ENCODE measurements at regions of chr2 and their contacts with region 1.

Region 1: DNA sequence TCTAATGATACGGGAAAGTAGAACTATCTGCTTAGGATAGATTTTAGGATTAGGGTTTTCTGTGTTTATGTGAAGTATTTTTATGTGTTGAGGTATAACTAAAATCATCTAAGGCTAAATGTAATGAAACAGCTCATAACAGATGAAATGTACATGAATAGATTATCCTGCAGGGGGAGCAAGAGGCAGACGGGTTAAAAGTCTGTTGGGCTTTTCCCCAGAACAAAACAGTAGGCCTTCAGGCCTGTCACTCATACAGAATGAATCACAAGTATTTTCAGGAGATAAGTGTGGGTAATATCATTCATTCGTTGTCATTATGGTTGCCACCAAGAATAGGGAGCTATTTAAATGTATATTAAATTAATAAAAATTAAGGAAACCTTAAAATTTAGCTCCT is 107.9 kb upstream of the IL1R2 start:
- DNase-seq: no peak
- H3K4me3 ChIP-seq: no peak overlapping the region
- H3K27ac ChIP-seq: no peak overlapping the region
- H3K4me1 ChIP-seq: peaks cover 0 to 19% (median 0%) of the 10 kb centered on the region in 4 donors
- H3K27me3 ChIP-seq: no peaks in the 10 kb centered on the region
- CTCF ChIP-seq: peak; percentile 45 to 58 (median 49)
- EP300 ChIP-seq: no peak
- POLR2A ChIP-seq: no peak

Region 2: DNA sequence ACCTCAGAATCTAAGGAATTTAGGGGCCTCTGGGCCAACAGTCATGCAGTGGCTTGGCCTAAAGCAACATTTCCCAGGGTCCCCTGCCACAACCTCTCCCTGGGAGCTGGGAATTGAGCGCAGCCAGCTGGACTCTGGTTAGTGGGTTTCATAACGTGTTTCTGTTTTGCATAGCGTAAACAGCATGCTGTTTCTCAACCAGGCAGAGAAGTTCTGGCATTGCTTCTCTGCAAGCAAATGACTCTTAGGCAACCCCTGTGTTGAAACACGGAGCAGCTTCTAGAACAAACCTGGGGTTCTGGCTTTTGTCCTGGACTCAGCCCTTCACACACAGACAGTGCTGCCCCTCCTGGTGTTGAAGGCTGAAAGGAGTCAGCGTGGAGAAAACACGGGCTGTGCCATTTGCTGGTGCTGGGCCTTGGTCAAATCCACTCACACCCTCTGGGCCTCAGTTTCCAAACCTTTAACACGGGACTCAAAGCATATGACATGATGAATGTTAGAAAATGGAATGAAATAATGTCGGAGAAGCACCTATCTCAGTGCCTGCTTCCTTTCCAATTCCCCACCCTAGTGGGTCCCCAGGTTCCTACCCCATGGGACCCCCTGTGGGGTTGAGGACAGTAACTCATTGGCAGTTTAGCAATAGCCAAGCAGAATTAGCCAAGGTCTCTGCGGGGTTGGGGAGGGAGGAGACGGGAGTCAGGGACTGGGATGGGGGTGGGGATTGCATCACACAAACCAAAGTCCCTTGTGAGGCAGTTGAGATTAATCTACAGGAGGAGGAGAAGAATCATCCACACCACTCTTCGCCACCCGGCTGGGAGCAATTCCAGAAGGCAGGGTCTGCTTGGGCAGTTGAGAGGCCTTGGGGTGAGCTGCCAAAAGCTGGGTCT is 77.7 kb after region 1 on chr2:
- intact Hi-C with region 1: loop called (anchors 2 kb)
- DNase-seq: peak; percentile 97
- H3K4me3 ChIP-seq: peak overlapping the region in 1 of 4 donors; percentile 3
- H3K27ac ChIP-seq: peak overlapping the region; percentile 79 to 90 (median 84)
- H3K4me1 ChIP-seq: peaks cover 0 to 32% (median 24%) of the 10 kb centered on the region in 4 donors
- H3K27me3 ChIP-seq: no peaks in the 10 kb centered on the region
- CTCF ChIP-seq: peak in 1 of 4 experiments; percentile 12
- EP300 ChIP-seq: peak; percentile 75 to 96 (median 94)
- POLR2A ChIP-seq: no peak

Region 3: GRCh38 chr2:101983928-101984327 is 100.1 kb after region 1 on chr2:
- intact Hi-C with region 1: loop called (anchors 5 kb)
- DNase-seq: no peak
- H3K4me3 ChIP-seq: no peak overlapping the region
- H3K27ac ChIP-seq: no peak overlapping the region
- H3K4me1 ChIP-seq: peaks cover 0 to 4% (median 0%) of the 10 kb centered on the region in 4 donors
- H3K27me3 ChIP-seq: no peaks in the 10 kb centered on the region
- CTCF ChIP-seq: peak in 2 of 4 experiments; percentile 11 to 23
- EP300 ChIP-seq: no peak
- POLR2A ChIP-seq: no peak

Region 4: GRCh38 chr2:102166189-102166845 is 282.5 kb after region 1 on chr2:
- intact Hi-C with region 1: loop called (anchors 5 kb)
- DNase-seq: peak; percentile 77
- H3K4me3 ChIP-seq: no peak overlapping the region
- H3K27ac ChIP-seq: peak overlapping the region in 2 of 4 donors; percentile 30 to 52
- H3K4me1 ChIP-seq: peaks cover 0 to 16% (median 2%) of the 10 kb centered on the region in 4 donors
- H3K27me3 ChIP-seq: no peaks in the 10 kb centered on the region
- CTCF ChIP-seq: peak; percentile 71 to 78 (median 72)
- EP300 ChIP-seq: no peak
- POLR2A ChIP-seq: no peak

Region 5: GRCh38 chr2:102240640-102241370 is 356.9 kb after region 1 on chr2:
- intact Hi-C with region 1: loop called (anchors 5 kb)
- DNase-seq: peak; percentile 96
- H3K4me3 ChIP-seq: no peak overlapping the region
- H3K27ac ChIP-seq: peak overlapping the region; percentile 51 to 63 (median 54)
- H3K4me1 ChIP-seq: peaks cover 0 to 11% (median 4%) of the 10 kb centered on the region in 4 donors
- H3K27me3 ChIP-seq: no peaks in the 10 kb centered on the region
- CTCF ChIP-seq: peak; percentile 89 to 96 (median 94)
- EP300 ChIP-seq: no peak
- POLR2A ChIP-seq: no peak

Region 6: GRCh38 chr2:102424754-102425153 is 540.9 kb after region 1 on chr2:
- intact Hi-C with region 1: no loop called
- DNase-seq: no peak
- H3K4me3 ChIP-seq: no peak overlapping the region
- H3K27ac ChIP-seq: no peak overlapping the region
- H3K4me1 ChIP-seq: no peaks in the 10 kb centered on the region
- H3K27me3 ChIP-seq: no peaks in the 10 kb centered on the region
- CTCF ChIP-seq: no peak
- EP300 ChIP-seq: no peak
- POLR2A ChIP-seq: no peak

Measured in sigmoid colon (tissue), 7 donors.